BJ (cell line): ENCODE measurements at regions of chr14 and their contacts with region 1.

Region 1: GRCh38 chr14:60064491-60065072 is 27.1 kb upstream of the PCNX4 start:
- DNase-seq: no peak
- H3K4me3 ChIP-seq: no peak overlapping the region
- H3K27me3 ChIP-seq: no peaks in the 10 kb centered on the region
- CTCF ChIP-seq: peak; percentile 57

Region 2: DNA sequence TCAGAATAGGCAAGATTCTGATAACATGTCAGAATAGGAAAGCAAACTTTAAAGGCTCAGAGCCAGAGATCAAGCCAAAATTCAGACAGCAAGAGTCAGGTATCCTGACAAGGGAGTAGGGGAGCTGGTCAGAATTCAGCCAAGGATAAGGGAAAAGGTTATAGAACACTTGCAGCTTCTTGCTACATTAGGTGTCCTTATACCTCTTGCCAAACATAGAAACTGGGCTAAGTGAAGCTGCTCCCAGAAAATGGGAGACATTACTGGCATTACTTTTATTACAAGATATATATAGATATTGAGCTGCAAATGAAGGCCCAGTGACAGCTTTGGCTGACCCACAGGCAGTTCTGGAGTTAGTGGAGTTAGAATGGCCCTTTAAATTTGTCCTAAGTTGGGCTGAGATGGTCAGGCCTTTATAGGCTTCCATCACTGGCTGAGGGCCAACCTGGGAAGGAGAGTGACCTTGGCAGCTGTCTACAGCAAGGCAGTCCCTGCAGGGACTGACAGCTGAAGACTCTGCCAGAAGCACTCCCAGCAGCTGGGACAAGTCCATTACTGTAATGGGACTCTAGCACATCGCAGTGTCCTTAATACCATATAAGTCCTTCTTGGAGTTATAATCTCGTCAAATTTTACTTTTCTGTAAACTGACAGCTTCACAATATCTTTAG is 61.6 kb before region 1 on chr14:
- CTCF ChIA-PET with region 1: no interaction called
- POLR2A ChIA-PET with region 1: no interaction called
- DNase-seq: no peak
- H3K4me3 ChIP-seq: no peak overlapping the region
- H3K27me3 ChIP-seq: no peaks in the 10 kb centered on the region
- CTCF ChIP-seq: no peak

Region 3: GRCh38 chr14:60102389-60102788 is 37.8 kb after region 1 on chr14:
- CTCF ChIA-PET with region 1: no interaction called
- POLR2A ChIA-PET with region 1: no interaction called
- DNase-seq: no peak
- H3K4me3 ChIP-seq: no peak overlapping the region
- H3K27me3 ChIP-seq: no peaks in the 10 kb centered on the region
- CTCF ChIP-seq: no peak

Region 4: DNA sequence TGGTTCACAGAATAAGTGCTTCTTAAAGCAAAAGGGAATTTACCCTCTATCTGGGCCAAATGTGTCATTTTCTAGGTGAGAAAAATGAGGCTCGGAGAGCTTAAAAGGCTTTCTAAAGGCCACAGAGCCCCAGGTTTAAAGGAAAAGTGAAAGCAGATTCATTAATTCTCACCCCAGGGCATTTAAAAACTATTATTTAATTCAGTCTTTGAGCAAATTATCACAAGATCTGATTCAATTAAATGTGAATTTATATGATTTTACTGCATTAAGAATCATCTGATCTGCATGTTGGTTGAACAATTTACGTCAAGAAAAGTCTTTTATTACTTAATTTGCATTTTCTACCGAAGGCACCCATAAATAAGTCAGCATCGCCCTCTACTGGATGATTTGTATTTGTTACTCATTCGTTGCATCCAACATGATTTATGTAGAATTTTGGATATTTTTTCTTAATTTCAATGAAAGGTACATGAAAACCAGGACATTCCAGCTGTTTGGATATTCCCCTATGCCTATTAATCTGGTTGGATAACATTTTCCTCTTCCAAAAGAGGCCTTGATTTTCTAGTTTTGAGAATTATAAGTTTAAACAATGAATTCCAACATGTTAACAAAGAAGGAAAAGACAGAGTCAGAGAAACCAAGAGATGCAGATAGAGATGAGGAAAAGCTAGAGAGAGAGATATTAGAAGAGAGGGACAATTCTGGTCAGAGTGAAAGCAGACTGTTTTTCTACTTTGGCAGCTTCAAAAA is 119.7 kb after region 1 on chr14:
- CTCF ChIA-PET with region 1: interaction called, 90 read pairs
- POLR2A ChIA-PET with region 1: no interaction called
- DNase-seq: no peak
- H3K4me3 ChIP-seq: peak overlapping the region; percentile 27
- H3K27me3 ChIP-seq: no peaks in the 10 kb centered on the region
- CTCF ChIP-seq: peak; percentile 57